ENCODE measurements at regions of chr2 and their contacts with region 1.

Region 1: DNA sequence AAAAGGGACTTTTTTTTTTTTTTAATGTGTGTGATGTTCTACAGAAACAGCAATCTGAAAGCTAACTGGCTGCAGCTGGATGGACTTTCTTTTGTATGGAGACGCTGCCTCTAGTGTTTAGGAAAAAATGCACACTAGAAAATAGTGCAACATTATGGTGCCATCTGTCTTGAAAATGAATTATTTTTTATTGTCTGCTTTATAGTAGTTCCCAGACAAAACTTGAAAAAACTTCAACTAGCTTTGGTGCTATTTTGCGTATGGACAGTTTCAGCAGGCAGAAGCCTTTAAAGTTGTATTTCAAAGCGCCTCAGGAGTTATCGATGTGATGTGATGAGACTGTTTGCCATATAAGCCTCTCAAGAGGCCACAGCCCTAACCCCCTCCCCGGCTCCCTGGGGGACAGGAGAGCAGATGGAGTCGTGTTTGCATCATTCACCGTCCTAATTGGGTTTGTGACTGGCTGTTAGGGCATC is 86.9 kb downstream of the LTBP1 start:
- DNase-seq: no peak
- ATAC-seq: peak; percentile 59 to 67

Region 2: GRCh38 chr2:32553829-32554432 is 479.7 kb before region 1 on chr2:
- intact Hi-C with region 1: loop called in 1 of 2 experiments (anchors 10 kb)
- DNase-seq: no peak
- ATAC-seq: peak in 1 of 2 donors; percentile 76

Region 3: GRCh38 chr2:32951672-32952071 is 82.0 kb before region 1 on chr2:
- intact Hi-C with region 1: loop called in 1 of 2 experiments (anchors 5 kb)
- DNase-seq: no peak
- ATAC-seq: no peak

Region 4: DNA sequence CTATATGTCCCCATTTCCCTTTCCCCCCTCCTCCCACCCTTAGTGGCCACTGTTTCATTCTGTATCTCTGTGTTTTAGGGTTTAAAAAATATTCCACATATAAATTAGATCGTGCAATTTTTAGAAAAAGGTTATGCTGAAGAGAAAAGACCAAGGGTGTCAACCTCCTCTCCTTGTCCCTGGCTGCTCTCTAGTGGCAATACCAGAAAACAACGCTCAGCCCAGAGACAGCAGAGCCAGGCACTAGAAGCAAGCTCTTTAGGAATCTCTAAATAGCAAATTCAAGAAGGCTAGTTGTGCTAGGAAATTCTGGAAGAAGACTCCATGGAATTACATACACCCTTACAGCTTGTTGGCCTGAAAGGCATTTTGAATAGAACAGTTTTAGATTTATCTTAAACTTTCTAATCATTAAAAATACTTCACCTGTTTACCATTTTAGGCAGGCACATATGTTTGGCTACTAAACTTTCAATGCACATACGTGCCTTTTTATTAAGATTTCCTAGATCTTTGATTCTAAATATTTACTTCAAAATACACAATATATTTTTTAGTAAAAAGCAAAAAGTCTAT is 407.7 kb after region 1 on chr2:
- intact Hi-C with region 1: loop called in 1 of 2 experiments (anchors 10 kb)
- DNase-seq: peak; percentile 28
- ATAC-seq: peak; percentile 82

Region 5: DNA sequence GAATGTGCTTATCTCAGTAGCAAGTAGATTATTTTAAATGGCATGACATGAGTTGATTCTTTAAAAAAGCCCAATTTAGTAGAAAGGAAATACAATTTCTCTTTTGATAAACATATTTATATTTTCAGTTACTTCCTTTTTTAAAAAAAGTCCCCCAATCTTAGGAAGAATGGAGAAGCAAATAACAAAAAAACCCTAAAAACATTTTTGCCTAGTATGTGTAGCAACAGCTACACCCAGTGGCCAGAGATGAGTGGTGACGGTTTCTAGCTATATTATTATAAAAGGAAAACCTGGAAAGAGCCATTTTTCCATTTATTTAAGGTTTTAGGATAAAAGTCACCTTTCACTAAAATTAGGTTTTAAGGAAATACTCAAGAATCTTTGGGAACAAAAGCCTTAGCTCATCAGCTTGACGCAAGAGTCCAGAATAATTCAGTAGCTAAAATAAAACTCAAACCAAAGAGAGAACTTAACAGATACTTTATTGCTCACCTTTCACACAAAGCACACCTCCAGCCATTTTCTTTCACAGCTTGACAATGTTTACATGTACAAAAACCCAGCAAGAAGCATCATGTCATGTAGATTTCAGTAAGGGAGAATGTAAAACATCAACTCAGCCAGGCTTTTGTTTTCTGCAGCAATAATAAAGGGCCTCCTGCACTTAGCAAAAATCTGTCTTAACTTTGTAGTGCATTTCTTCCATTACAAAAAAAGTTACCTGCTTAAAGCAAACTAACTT is 549.7 kb after region 1 on chr2:
- intact Hi-C with region 1: loop called in 1 of 2 experiments (anchors 10 kb)
- DNase-seq: no peak
- ATAC-seq: peak; percentile 49 to 67

Measured in left cardiac atrium (tissue), 4 donors.